ENCODE measurements at regions of chr11 and their contacts with region 1.

Region 1: DNA sequence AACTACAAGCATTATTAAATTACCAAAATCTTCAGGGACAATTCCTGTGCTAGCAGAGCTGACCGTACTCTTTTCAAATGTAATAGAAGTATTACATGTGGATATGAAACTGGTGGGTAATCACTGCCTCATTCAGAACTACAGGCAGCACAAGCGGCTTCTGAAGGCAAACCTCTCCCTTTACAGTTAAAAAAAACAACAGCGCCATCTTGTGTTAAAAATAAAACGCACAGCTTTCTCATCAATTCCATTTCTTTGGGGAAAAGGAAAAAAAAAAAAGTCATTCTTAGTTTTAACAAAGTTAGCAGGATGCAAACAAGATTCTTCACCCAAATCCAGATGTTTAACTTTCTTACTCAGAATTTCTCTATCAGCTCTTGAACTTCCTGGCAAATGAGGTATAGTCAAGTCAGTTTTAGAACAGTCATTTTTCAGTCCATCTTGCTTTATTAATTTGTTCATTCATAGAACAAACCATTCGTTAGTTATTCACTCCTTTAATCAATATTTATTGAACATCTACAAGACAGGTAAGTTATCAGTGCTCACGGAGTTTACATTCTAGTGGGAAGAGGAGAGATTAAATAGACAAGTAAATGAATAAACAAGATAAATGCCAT is 331.8 kb upstream of the MPPED2 start:
- ATAC-seq: peak; percentile 44 to 72 (median 64)
- H3K4me3 ChIP-seq: no peak overlapping the region
- H3K27ac ChIP-seq: no peak overlapping the region
- H3K4me1 ChIP-seq: peaks cover 3 to 11% of the 10 kb centered on the region in 2 donors

Region 2: GRCh38 chr11:29432719-29433325 is 1485.1 kb before region 1 on chr11:
- in situ Hi-C with region 1: loop called in 4 of 9 experiments (anchors 25 kb)
- ATAC-seq: peak in 1 of 8 experiments; percentile 18
- H3K4me3 ChIP-seq: no peak overlapping the region
- H3K27ac ChIP-seq: no peak overlapping the region
- H3K4me1 ChIP-seq: no peaks in the 10 kb centered on the region

Region 3: DNA sequence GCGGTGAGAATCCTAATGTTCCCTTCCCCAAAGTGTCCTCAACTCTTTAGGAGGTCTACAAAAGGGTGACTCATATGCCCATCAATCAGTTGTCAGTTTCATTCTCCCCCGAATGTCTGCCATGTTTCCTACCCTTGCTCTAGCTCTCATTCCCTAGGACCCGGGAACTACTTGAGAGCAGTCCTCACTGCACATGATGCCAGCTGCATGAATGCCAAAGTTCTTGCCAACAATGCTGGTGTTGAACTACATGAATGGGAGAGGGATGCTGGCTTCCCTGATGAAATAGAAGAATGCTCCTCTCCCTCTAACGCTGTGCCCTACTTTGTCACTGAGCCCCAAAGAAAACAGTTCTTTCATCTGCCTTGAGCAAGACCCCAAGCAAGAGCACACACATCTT is 699.7 kb before region 1 on chr11:
- in situ Hi-C with region 1: no loop called
- ATAC-seq: no peak
- H3K4me3 ChIP-seq: no peak overlapping the region
- H3K27ac ChIP-seq: no peak overlapping the region
- H3K4me1 ChIP-seq: no peaks in the 10 kb centered on the region

Region 4: DNA sequence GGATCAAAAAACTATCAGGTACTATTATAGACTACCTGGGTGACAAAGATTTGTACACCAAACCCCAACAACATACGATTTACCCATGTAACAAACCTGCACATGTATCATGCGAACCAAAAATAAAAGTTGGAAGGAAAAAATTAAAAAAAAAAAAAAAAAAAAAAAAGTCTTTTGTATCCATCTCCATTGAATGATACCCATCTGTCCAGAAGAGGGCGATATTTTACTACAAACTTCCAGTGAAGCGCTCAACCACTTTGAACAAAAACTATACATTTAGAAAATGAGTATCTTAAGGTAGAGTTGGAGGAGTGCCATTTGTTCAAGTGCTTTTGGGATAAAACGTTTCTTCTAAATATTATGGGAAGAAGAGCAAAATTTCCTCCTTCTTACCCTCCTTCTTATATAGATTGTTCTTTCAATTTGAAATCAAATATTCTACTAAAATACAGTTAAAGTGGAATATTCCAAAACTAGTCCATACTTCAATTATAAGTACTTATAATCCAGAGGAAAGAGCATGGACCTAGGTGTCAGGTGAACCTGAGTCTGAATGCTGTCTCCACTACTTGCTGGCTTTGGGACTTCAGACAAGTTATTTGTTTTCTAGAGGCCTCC is 571.8 kb before region 1 on chr11:
- in situ Hi-C with region 1: loop called in 6 of 9 experiments (anchors 10 to 25 kb)
- ATAC-seq: peak in 4 of 8 experiments; percentile 42 to 68 (median 47)
- H3K4me3 ChIP-seq: no peak overlapping the region
- H3K27ac ChIP-seq: no peak overlapping the region
- H3K4me1 ChIP-seq: peaks cover 2 to 6% of the 10 kb centered on the region in 2 donors

Region 5: GRCh38 chr11:30358536-30358935 is 559.4 kb before region 1 on chr11:
- in situ Hi-C with region 1: loop called in 4 of 9 experiments (anchors 10 to 25 kb)
- ATAC-seq: no peak
- H3K4me3 ChIP-seq: no peak overlapping the region
- H3K27ac ChIP-seq: no peak overlapping the region
- H3K4me1 ChIP-seq: no peaks in the 10 kb centered on the region

Region 6: DNA sequence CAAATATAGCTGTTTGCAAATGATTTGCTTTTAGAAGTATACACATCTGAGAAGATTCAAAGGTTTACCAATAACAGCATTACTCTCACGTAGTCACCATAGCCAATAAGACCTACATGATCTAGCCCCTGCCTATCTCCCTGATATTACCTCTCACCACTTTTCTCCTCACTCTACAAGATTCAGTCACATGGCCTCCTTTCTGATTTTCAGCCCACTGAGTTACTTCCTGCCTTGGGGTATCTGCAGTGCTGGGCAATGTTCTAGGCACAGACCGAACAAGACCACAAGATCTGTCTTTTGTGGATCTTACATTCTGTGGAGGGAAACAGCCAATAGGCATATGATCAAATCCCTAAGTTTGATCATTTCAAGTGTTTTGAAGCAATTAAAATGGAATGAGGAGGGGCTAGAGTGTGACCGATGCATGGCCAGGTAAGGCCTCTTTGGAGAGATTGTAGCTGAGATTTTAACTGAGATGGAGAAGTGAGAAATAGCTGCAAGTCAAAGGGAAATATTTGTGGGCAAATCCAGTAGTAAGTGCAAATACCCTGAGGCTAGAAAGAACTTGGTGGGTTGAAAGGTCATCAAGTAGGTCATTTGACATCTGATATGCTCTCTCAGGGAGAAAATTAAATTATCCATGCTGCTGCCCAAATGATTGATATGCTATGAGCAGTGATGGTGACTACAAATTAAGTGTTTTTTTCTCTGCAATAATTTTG is 552.0 kb before region 1 on chr11:
- in situ Hi-C with region 1: loop called in 3 of 9 experiments (anchors 25 kb)
- ATAC-seq: no peak
- H3K4me3 ChIP-seq: no peak overlapping the region
- H3K27ac ChIP-seq: no peak overlapping the region
- H3K4me1 ChIP-seq: peaks cover 12 to 15% of the 10 kb centered on the region in 2 donors

Region 7: GRCh38 chr11:30567120-30567519 is 350.8 kb before region 1 on chr11:
- in situ Hi-C with region 1: no loop called
- ATAC-seq: peak in 1 of 8 experiments; percentile 57
- H3K4me3 ChIP-seq: no peak overlapping the region
- H3K27ac ChIP-seq: no peak overlapping the region
- H3K4me1 ChIP-seq: peaks cover 6 to 10% of the 10 kb centered on the region in 2 donors

Measured in motor neuron (in vitro differentiated cells).